ENCODE measurements at regions of chr10 and their contacts with region 1.

Region 1: DNA sequence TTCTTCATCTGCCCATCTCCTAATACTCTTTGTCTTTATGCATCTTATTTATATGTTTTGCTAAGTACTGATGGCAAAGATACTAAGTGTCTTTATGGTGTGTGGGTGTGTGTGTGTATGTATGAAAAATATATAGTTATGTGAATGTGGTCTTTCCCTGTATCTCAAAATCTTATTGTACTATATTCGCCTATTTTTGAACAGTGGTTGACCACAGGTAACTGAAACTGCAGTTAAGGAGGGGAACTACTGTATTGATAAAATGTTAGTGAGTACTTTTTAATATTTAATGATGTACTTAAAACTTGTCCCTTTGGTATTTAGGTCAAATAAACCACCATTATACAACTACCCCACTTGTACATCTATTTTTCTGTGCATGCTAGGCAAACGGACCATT is 85.9 kb downstream of the ADD3 start:
- DNase-seq: no peak
- H3K4me3 Mint-ChIP-seq: no peak overlapping the region
- H3K27ac Mint-ChIP-seq: no peak overlapping the region
- H3K4me1 Mint-ChIP-seq: peaks cover 76% of the 10 kb centered on the region
- H3K27me3 Mint-ChIP-seq: no peaks in the 10 kb centered on the region

Region 2: DNA sequence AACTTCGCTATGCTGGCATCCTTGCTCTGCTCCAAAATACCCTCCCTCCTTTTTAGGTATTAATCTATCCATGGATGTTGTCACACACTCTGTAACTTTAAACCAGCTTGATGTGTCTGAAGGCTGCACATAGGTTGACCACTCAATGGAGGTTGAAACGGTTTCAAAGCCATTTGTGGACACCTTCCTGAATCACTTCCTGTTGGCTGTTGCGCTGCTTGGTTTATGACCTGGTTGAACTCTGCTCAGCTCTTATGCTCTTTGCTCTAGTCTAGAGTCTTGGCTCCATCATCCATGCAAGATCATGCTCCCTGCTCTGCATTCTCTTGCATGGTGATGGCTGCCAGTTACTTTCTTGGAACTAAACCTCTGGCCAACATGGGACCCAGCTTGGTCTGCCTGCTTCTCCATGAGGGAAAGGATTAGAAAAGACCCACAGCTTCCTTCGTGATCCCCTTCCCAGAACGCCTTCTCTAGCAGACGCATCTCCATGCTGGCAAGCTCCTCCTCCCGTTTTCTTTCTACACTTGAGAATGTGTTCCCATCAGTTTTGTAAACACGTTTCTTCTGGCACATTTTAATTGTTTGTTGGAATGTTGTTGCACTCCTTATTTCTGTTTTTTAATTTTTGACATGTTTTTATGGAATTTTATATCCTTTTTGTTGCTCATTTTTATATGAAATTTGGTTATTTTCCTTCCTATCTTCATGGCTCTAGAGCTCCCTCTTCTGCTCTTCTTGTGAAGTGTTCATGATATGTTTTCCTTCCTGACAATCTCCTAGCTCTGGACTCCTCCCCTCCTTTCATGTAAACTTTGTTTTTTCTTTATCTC is 320.2 kb before region 1 on chr10:
- CTCF ChIA-PET with region 1: no interaction called
- intact Hi-C with region 1: no loop called
- DNase-seq: no peak
- H3K4me3 Mint-ChIP-seq: no peak overlapping the region
- H3K27ac Mint-ChIP-seq: no peak overlapping the region
- H3K4me1 Mint-ChIP-seq: no peaks in the 10 kb centered on the region
- H3K27me3 Mint-ChIP-seq: peaks cover 2% of the 10 kb centered on the region

Region 3: GRCh38 chr10:110081911-110082310 is 11.8 kb before region 1 on chr10:
- CTCF ChIA-PET with region 1: interaction called, 6 read pairs
- intact Hi-C with region 1: loop called (anchors 1 kb)
- DNase-seq: no peak
- H3K4me3 Mint-ChIP-seq: peak overlapping the region; percentile 46
- H3K27ac Mint-ChIP-seq: peak overlapping the region; percentile 88
- H3K4me1 Mint-ChIP-seq: peaks cover 86% of the 10 kb centered on the region
- H3K27me3 Mint-ChIP-seq: no peaks in the 10 kb centered on the region

Region 4: DNA sequence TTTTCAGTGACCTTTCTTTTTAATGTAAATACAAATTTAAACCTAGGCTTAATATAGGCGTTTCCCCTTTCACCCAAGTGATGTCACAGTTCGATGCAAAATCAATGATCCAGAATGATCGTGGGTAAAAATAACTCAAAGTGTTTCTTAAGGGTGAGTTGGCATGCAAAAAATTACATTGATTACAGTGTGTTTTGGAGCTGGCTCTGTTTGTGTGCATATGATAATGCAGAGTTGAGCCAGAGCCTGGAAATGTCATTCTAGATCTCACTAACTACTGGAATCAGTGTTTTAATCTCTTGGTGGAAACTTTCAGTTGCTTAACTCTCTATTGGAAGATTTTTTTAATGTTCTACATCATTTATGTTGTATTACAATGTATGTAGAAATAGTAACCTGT is 41.2 kb after region 1 on chr10:
- CTCF ChIA-PET with region 1: no interaction called
- intact Hi-C with region 1: no loop called
- DNase-seq: no peak
- H3K4me3 Mint-ChIP-seq: no peak overlapping the region
- H3K27ac Mint-ChIP-seq: no peak overlapping the region
- H3K4me1 Mint-ChIP-seq: peaks cover 28% of the 10 kb centered on the region
- H3K27me3 Mint-ChIP-seq: no peaks in the 10 kb centered on the region

Measured in activated naive CD4-positive, alpha-beta T cell treated with anti-CD3 and anti-CD28 coated beads for 36 hours (primary cell).